Activated CD8-positive, alpha-beta T cell treated with anti-CD3 and anti-CD28 coated beads for 36 hours (primary cell): ENCODE measurements at regions of chr6 and their contacts with region 1.

Region 1: GRCh38 chr6:142926494-142927270 is 18.3 kb downstream of the HIVEP2 start:
- DNase-seq: peak; percentile 90
- ATAC-seq: peak; percentile 85
- H3K4me3 Mint-ChIP-seq: peak overlapping the region; percentile 96
- H3K27ac Mint-ChIP-seq: peak overlapping the region; percentile 97
- H3K4me1 Mint-ChIP-seq: peaks cover 55% of the 10 kb centered on the region
- H3K27me3 Mint-ChIP-seq: no peaks in the 10 kb centered on the region
- CTCF ChIP-seq: no peak

Region 2: GRCh38 chr6:142395768-142396231 is 530.9 kb before region 1 on chr6:
- CTCF ChIA-PET with region 1: no interaction called
- POLR2A ChIA-PET with region 1: no interaction called
- intact Hi-C with region 1: no loop called
- DNase-seq: no peak
- ATAC-seq: peak; percentile 95
- H3K4me3 Mint-ChIP-seq: no peak overlapping the region
- H3K27ac Mint-ChIP-seq: peak overlapping the region; percentile 28
- H3K4me1 Mint-ChIP-seq: peaks cover 29% of the 10 kb centered on the region
- H3K27me3 Mint-ChIP-seq: no peaks in the 10 kb centered on the region
- CTCF ChIP-seq: no peak

Region 3: DNA sequence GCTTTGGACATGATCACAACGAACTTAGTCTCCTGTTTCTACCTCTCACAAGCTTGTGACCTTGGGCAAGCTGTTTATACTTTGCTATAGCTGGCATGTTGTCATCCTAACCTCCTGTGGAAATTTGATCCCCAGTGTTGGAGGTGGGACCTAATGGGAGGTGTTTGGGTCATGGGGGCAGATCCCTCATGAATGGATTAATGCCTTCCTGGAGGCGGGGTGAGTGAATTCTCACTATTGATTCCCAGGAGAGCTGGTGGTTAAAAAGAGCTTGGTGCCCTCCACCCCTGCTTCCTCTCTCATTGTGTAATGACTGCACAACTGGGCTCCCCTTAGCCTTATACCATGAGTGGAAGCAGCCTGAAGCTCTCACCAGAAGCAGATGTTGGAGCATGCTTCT is 210.6 kb before region 1 on chr6:
- CTCF ChIA-PET with region 1: no interaction called
- POLR2A ChIA-PET with region 1: no interaction called
- intact Hi-C with region 1: no loop called
- DNase-seq: no peak
- ATAC-seq: no peak
- H3K4me3 Mint-ChIP-seq: no peak overlapping the region
- H3K27ac Mint-ChIP-seq: no peak overlapping the region
- H3K4me1 Mint-ChIP-seq: peaks cover 5% of the 10 kb centered on the region
- H3K27me3 Mint-ChIP-seq: peaks cover 1% of the 10 kb centered on the region
- CTCF ChIP-seq: no peak

Region 4: DNA sequence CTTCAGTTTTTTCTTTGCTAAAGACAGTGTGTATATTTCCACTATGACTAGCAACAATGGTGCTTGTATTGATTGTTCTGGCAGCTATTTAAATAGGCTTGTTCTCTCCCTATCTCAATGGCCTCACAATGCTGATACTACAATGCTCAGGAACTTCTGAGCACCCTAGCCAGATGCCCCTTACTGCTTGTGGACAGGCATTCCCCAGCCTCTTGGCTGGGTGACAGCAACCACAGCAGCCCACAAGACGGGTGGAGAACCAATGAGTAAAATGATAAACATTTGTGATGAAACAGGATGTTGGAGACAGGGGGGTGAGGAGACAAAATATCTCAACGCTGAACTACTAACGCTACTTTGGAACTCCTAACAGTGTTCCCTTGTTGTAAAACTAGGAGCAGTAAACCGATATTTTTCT is 24.0 kb before region 1 on chr6:
- CTCF ChIA-PET with region 1: interaction called, 3 read pairs
- POLR2A ChIA-PET with region 1: interaction called, 10 read pairs
- intact Hi-C with region 1: no loop called
- DNase-seq: peak; percentile 90
- ATAC-seq: peak; percentile 61
- H3K4me3 Mint-ChIP-seq: peak overlapping the region; percentile 50
- H3K27ac Mint-ChIP-seq: peak overlapping the region; percentile 86
- H3K4me1 Mint-ChIP-seq: peaks cover 64% of the 10 kb centered on the region
- H3K27me3 Mint-ChIP-seq: no peaks in the 10 kb centered on the region
- CTCF ChIP-seq: no peak

Region 5: DNA sequence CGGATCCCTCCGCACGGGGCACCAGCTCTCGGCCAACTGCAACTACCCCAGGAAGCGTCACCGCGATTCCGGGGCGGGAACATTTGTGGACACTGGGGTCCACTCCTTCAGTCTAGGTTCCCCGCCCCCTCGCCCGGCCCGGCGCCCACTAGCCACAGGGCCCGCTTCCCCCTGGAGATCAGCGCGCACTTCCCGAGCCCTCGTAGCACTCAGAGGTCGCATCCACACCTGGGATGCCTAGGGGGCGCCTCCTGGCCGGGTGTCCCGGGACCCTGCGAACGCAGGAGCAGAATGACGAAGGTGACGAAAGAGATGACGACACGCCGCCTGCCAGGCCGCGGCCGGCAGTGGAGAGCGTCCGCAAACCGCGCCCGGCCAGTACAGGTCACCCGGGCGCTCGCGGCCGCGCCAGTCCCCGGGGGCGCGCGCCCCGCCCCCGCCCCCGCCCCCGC is 133.7 kb after region 1 on chr6:
- CTCF ChIA-PET with region 1: no interaction called
- POLR2A ChIA-PET with region 1: no interaction called
- intact Hi-C with region 1: no loop called
- DNase-seq: peak; percentile 86
- ATAC-seq: peak; percentile 74
- H3K4me3 Mint-ChIP-seq: peak overlapping the region; percentile 88
- H3K27ac Mint-ChIP-seq: peak overlapping the region; percentile 96
- H3K4me1 Mint-ChIP-seq: peaks cover 28% of the 10 kb centered on the region
- H3K27me3 Mint-ChIP-seq: no peaks in the 10 kb centered on the region
- CTCF ChIP-seq: no peak